ENCODE measurements at regions of chr15 and their contacts with region 1.

Region 1: DNA sequence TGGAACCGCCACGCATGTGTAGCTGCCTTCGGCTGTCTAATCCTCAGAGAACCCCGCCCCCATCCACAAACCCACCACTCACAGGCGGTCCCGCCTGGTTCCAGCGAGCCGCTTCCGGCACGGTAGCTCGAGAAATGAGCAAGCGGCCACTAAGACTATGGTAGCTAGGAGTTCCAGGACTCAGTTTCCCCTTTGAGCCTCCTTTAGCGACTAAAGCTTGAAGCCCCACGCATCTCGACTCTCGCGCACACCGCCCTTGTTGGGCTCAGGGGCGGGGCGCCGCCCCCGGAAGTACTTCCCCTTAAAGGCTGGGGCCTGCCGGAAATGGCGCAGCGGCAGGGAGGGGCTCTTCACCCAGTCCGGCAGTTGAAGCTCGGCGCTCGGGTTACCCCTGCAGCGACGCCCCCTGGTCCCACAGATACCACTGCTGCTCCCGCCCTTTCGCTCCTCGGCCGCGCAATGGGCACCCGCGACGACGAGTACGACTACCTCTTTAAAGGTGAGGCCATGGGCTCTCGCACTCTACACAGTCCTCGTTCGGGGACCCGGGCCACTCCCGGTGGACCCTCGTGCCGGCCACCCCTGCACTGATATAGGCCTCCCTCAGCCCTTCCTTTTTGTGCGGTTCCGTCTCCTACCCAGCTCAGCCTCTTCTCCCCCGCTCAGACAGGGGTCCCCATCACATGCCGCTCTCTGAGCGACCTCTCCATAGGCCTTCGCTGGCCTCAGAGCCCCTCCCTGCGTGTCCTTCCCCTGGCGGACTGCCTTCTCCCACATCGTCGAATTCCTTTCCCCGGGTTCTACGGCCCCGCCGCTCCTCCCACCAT is at the start of gene RAB11A:
- DNase-seq: peak; percentile 86 to 98 (median 94)
- ATAC-seq: peak; percentile 88
- H3K4me3 ChIP-seq: peak within 1 kb of the TSS; percentile 84 to 98
- H3K4me3 Mint-ChIP-seq: peak within 1 kb of the TSS; percentile 99
- H3K27ac ChIP-seq: peak within 1 kb of the TSS; percentile 90 to 94
- H3K27ac Mint-ChIP-seq: peak within 1 kb of the TSS; percentile 94
- H3K4me1 ChIP-seq: peaks cover 24% of the 10 kb centered on the region
- H3K4me1 Mint-ChIP-seq: peaks cover 31% of the 10 kb centered on the region
- H3K27me3 ChIP-seq: no peaks in the 10 kb centered on the region
- H3K27me3 Mint-ChIP-seq: no peaks in the 10 kb centered on the region
- CTCF ChIP-seq: peak; percentile 42
- total RNA-seq, gene RAB11A: 85.9 to 88.3 TPM

Region 2: DNA sequence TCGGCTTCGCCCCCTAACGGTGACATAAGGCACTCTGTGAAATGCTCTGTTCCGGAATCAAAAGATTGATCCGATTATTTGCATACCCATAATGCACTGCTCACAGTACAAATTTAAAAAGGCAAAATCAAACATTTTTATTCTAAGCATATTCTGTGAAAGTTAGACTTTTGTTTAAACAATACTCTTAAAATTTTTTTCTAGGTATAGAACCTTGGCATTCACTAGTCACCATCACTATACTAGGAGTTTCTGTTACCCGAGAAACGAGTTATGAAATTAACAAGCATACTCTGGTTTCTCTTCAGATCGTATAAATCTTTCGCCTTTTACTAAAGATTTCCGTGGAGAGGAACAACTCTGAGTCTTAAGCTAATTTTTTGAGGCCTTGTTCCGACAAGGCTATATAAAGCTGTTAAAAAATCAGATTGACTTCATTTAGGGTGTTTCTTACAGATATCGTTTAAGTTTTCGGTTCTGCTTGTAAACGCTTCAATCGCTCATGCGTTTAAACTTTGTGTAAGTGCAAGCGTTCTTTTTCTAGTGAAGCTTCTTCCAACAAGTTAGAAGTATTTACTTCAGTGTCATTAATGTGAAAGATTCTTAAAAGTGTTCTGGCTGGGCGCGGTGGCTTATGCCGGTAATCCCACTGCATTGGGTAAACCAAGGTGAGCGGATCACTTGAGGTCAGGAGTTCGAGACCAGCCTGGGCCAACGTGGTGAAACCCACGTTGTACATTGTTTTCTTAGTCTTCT is 564.8 kb before region 1 on chr15 and contains the start of gene RNU5B-1:
- CTCF ChIA-PET with region 1: no interaction called
- POLR2A ChIA-PET with region 1: interaction called, 3 read pairs
- intact Hi-C with region 1: loop called in 1 of 2 experiments (anchors 5 kb)
- DNase-seq: peak; percentile 41 to 93 (median 72)
- ATAC-seq: peak; percentile 79
- H3K4me3 ChIP-seq: peak within 1 kb of the TSS; percentile 62 to 64
- H3K4me3 Mint-ChIP-seq: peak within 1 kb of the TSS; percentile 94
- H3K27ac ChIP-seq: peak within 1 kb of the TSS; percentile 90 to 98
- H3K27ac Mint-ChIP-seq: peak within 1 kb of the TSS; percentile 98
- H3K4me1 ChIP-seq: peaks cover 10% of the 10 kb centered on the region
- H3K4me1 Mint-ChIP-seq: peaks cover 41% of the 10 kb centered on the region
- H3K27me3 ChIP-seq: no peaks in the 10 kb centered on the region
- H3K27me3 Mint-ChIP-seq: no peaks in the 10 kb centered on the region
- CTCF ChIP-seq: peak; percentile 43
- total RNA-seq, gene RNU5B-1: 17.0 to 36.6 TPM

Region 3: DNA sequence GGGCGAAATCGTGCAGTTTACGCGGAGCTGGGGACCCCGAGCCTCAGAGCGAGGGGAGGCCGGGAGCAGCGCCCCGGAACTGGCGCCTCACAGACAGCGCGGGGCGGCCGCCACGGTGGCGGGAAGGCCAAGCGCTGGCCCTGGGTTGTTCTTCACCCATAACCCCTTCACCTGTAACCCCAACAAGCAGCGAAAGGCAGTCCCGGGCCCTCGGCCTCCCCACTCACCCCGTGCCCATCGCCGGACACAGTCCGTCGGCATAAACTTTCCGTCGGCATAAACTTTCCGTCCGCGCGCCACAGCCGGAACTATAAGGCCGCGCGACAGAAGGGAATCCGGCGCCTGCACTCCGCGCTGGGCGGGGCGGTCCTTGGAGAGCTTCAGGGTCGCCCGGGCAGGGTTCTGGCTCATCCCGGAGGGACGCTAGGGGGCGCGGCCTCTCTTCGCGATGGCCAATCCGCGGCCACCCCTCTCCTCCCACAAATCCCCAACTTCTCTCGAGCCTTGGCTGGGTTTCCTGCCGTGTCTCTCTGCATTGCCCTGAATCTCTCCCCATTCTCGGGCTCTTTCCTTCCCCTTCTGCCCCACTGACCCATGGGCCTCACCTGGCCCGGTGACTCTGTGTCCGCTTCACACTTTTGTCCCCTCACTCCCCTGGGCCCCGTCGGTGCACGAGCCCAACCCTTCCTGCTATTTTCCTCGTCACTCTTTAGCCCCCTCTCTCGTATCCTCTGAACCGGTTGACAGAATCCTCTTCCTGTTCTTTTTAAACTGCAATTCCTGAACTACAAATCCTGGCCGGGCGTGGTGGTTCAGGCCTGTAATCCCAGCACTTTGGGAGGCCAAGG is 258.2 kb before region 1 on chr15 and contains the start of gene INTS14:
- CTCF ChIA-PET with region 1: interaction called, 7 read pairs
- POLR2A ChIA-PET with region 1: interaction called, 6 read pairs
- intact Hi-C with region 1: loop called (anchors 1 kb)
- DNase-seq: peak; percentile 81 to 95 (median 92)
- ATAC-seq: peak; percentile 95
- H3K4me3 ChIP-seq: peak within 1 kb of the TSS; percentile 85 to 96
- H3K4me3 Mint-ChIP-seq: peak within 1 kb of the TSS; percentile 97
- H3K27ac ChIP-seq: peak within 1 kb of the TSS; percentile 80 to 95
- H3K27ac Mint-ChIP-seq: peak within 1 kb of the TSS; percentile 98
- H3K4me1 ChIP-seq: peaks cover 17% of the 10 kb centered on the region
- H3K4me1 Mint-ChIP-seq: peaks cover 43% of the 10 kb centered on the region
- H3K27me3 ChIP-seq: no peaks in the 10 kb centered on the region
- H3K27me3 Mint-ChIP-seq: no peaks in the 10 kb centered on the region
- CTCF ChIP-seq: peak; percentile 26
- total RNA-seq, gene INTS14: 26.7 to 28.6 TPM

Region 4: GRCh38 chr15:65832549-65833364 is 36.6 kb before region 1 on chr15:
- CTCF ChIA-PET with region 1: interaction called, 6 read pairs
- POLR2A ChIA-PET with region 1: interaction called, 10 read pairs
- intact Hi-C with region 1: loop called in 1 of 2 experiments (anchors 2 kb)
- DNase-seq: peak; percentile 12 to 81 (median 55)
- ATAC-seq: peak; percentile 40
- H3K4me3 ChIP-seq: peak overlapping the region; percentile 2 to 18
- H3K4me3 Mint-ChIP-seq: peak overlapping the region; percentile 75
- H3K27ac ChIP-seq: peak overlapping the region; percentile 39 to 89
- H3K27ac Mint-ChIP-seq: peak overlapping the region; percentile 94
- H3K4me1 ChIP-seq: peaks cover 52% of the 10 kb centered on the region
- H3K4me1 Mint-ChIP-seq: peaks cover 57% of the 10 kb centered on the region
- H3K27me3 ChIP-seq: no peaks in the 10 kb centered on the region
- H3K27me3 Mint-ChIP-seq: no peaks in the 10 kb centered on the region
- CTCF ChIP-seq: no peak

Region 5: DNA sequence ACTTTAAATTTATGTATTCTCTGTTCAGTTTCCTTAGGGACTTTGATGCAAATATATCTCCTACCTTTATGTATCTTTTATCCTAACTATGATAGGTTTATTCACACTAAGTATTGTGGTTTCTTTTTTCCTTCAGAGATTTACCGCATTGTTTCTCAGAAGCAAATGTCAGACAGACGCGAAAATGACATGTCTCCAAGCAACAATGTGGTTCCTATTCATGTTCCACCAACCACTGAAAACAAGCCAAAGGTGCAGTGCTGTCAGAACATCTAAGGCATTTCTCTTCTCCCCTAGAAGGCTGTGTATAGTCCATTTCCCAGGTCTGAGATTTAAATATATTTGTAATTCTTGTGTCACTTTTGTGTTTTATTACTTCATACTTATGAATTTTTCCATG is 18.2 kb after region 1 on chr15:
- CTCF ChIA-PET with region 1: interaction called, 3 read pairs
- POLR2A ChIA-PET with region 1: interaction called, 10 read pairs
- intact Hi-C with region 1: loop called (anchors 1 kb)
- DNase-seq: peak in 7 of 9 experiments; percentile 4 to 84 (median 38)
- ATAC-seq: peak; percentile 96
- H3K4me3 ChIP-seq: no peak overlapping the region
- H3K4me3 Mint-ChIP-seq: peak overlapping the region; percentile 35
- H3K27ac ChIP-seq: peak overlapping the region; percentile 37 to 47
- H3K27ac Mint-ChIP-seq: peak overlapping the region; percentile 90
- H3K4me1 ChIP-seq: peaks cover 48% of the 10 kb centered on the region
- H3K4me1 Mint-ChIP-seq: peaks cover 71% of the 10 kb centered on the region
- H3K27me3 ChIP-seq: no peaks in the 10 kb centered on the region
- H3K27me3 Mint-ChIP-seq: no peaks in the 10 kb centered on the region
- CTCF ChIP-seq: no peak

Measured in CD8-positive, alpha-beta T cell (primary cell).